ENCODE measurements at regions of chr22 and their contacts with region 1.

Region 1: GRCh38 chr22:39514373-39514973 is 5.9 kb upstream of the ATF4 start:
- DNase-seq: peak; percentile 66
- ATAC-seq: peak; percentile 41
- H3K4me3 ChIP-seq: no peak overlapping the region
- H3K4me3 Mint-ChIP-seq: no peak overlapping the region
- H3K27ac ChIP-seq: no peak overlapping the region
- H3K27ac Mint-ChIP-seq: peak overlapping the region; percentile 60
- H3K4me1 ChIP-seq: peaks cover 7 to 9% of the 10 kb centered on the region in 2 donors
- H3K4me1 Mint-ChIP-seq: peaks cover 28% of the 10 kb centered on the region
- H3K27me3 ChIP-seq: no peaks in the 10 kb centered on the region
- H3K27me3 Mint-ChIP-seq: no peaks in the 10 kb centered on the region
- CTCF ChIP-seq: peak; percentile 73

Region 2: GRCh38 chr22:38989466-38989865 is 525.0 kb before region 1 on chr22:
- CTCF ChIA-PET with region 1: no interaction called
- POLR2A ChIA-PET with region 1: no interaction called
- intact Hi-C with region 1: no loop called
- DNase-seq: no peak
- ATAC-seq: no peak
- H3K4me3 ChIP-seq: no peak overlapping the region
- H3K4me3 Mint-ChIP-seq: no peak overlapping the region
- H3K27ac ChIP-seq: no peak overlapping the region
- H3K27ac Mint-ChIP-seq: peak overlapping the region; percentile 46
- H3K4me1 ChIP-seq: peaks cover 8 to 29% of the 10 kb centered on the region in 2 donors
- H3K4me1 Mint-ChIP-seq: peaks cover 39% of the 10 kb centered on the region
- H3K27me3 ChIP-seq: peaks cover 0 to 2% (median 0%) of the 10 kb centered on the region in 4 experiments
- H3K27me3 Mint-ChIP-seq: peaks cover 6% of the 10 kb centered on the region
- CTCF ChIP-seq: no peak

Region 3: GRCh38 chr22:39343259-39344048 is 171.0 kb before region 1 on chr22:
- CTCF ChIA-PET with region 1: interaction called, 28 read pairs
- POLR2A ChIA-PET with region 1: no interaction called
- intact Hi-C with region 1: loop called (anchors 1 kb)
- DNase-seq: peak; percentile 76
- ATAC-seq: peak; percentile 90
- H3K4me3 ChIP-seq: no peak overlapping the region
- H3K4me3 Mint-ChIP-seq: no peak overlapping the region
- H3K27ac ChIP-seq: no peak overlapping the region
- H3K27ac Mint-ChIP-seq: no peak overlapping the region
- H3K4me1 ChIP-seq: peaks cover 6 to 8% of the 10 kb centered on the region in 2 donors
- H3K4me1 Mint-ChIP-seq: peaks cover 4% of the 10 kb centered on the region
- H3K27me3 ChIP-seq: peaks cover 0 to 10% (median 0%) of the 10 kb centered on the region in 4 experiments
- H3K27me3 Mint-ChIP-seq: peaks cover 10% of the 10 kb centered on the region
- CTCF ChIP-seq: peak; percentile 85

Region 4: GRCh38 chr22:39496131-39496838 is 18.2 kb before region 1 on chr22:
- CTCF ChIA-PET with region 1: interaction called, 83 read pairs
- POLR2A ChIA-PET with region 1: interaction called, 3 read pairs
- intact Hi-C with region 1: loop called (anchors 1 kb)
- DNase-seq: peak; percentile 62
- ATAC-seq: peak; percentile 75
- H3K4me3 ChIP-seq: no peak overlapping the region
- H3K4me3 Mint-ChIP-seq: no peak overlapping the region
- H3K27ac ChIP-seq: no peak overlapping the region
- H3K27ac Mint-ChIP-seq: peak overlapping the region; percentile 70
- H3K4me1 ChIP-seq: peaks cover 4 to 7% of the 10 kb centered on the region in 2 donors
- H3K4me1 Mint-ChIP-seq: peaks cover 16% of the 10 kb centered on the region
- H3K27me3 ChIP-seq: no peaks in the 10 kb centered on the region
- H3K27me3 Mint-ChIP-seq: no peaks in the 10 kb centered on the region
- CTCF ChIP-seq: peak; percentile 73

Region 5: DNA sequence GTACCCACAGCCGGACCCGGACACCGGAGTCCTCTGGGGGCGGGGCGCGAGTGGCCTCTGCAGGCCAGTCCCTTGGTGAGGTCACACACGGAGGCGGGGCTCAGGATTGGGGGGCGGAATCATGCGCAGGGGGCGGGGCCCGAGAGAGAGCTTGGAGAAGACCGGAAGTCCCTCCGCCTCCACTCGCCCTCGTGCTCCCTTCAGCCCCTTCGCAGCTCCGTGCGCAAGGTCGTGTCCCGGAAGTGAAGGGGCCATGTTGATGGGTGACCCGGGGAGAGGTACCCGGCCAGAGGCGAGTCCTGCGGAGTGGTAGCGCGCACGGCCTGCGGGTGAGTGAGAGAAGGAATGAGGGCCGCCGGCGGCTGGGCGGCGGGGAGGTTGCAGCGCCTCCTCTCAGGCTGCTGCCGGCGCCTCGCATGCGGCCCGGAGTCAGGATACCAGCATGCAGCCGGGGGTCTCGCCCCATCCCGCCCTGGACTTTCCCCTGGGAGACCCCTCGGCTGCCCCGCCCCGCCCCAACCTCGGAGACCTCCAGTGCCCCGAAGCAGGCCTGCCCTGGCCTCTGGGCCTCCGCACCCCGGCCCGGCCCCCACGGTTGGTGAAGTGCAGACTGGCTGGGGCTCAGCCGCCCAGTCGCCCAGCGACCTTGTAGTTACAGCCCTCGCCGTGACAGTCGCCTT is 12.2 kb before region 1 on chr22 and contains the start of gene MIEF1:
- CTCF ChIA-PET with region 1: interaction called, 83 read pairs
- POLR2A ChIA-PET with region 1: interaction called, 27 read pairs
- intact Hi-C with region 1: no loop called
- DNase-seq: peak; percentile 93
- ATAC-seq: peak; percentile 98
- H3K4me3 ChIP-seq: peak within 1 kb of the TSS; percentile 48 to 85 (median 83)
- H3K4me3 Mint-ChIP-seq: peak within 1 kb of the TSS; percentile 96
- H3K27ac ChIP-seq: peak within 1 kb of the TSS; percentile 45 to 74
- H3K27ac Mint-ChIP-seq: peak within 1 kb of the TSS; percentile 93
- H3K4me1 ChIP-seq: peaks cover 16 to 25% of the 10 kb centered on the region in 2 donors
- H3K4me1 Mint-ChIP-seq: peaks cover 39% of the 10 kb centered on the region
- H3K27me3 ChIP-seq: no peaks in the 10 kb centered on the region
- H3K27me3 Mint-ChIP-seq: no peaks in the 10 kb centered on the region
- CTCF ChIP-seq: no peak
- total RNA-seq, gene MIEF1: 37.2 and 43.4 TPM in 2 replicates

Measured in B cell (primary cell).